Naive thymus-derived CD4-positive, alpha-beta T cell (primary cell): ENCODE measurements at regions of chr3 and their contacts with region 1.

Region 1: DNA sequence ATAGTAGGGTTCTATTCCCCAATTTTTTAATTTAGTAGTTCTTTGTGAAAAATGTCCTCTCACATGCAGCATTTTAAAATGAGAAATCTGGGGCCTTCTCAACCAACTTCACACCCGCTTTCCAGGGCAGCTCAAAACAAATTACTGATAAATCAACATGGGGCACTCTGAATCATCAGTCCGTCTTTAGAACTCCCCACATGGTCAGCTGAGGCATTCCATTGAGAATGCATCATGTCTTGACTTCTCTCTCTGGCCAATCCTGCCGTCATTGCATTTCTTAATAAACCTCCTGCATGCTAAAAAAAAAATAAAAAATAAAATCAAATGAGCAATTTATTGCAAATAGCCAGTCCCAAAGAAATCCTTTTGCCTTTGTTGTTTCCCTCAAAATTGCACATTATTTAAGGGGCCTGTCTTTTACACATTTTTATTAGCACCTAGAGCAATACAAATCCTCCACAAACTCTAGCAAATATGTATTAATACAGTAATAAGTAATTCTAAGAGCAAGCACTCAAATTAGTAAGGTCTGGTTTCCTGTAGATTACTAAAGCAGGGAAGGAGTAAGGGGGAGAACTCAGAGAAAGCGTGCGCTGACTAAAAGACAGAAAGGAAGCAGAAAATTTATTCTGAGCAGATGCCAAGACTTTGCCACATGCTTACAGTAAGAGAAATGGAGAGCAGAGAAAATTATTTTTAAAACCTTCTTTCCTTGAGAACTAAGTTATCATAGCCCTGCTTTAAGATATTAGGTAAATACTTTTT is 175.7 kb downstream of the TNIK start:
- DNase-seq: no peak
- ATAC-seq: no peak
- H3K4me3 ChIP-seq: no peak overlapping the region
- H3K4me3 Mint-ChIP-seq: peak overlapping the region in 7 of 10 donors; percentile 1 to 65 (median 5)
- H3K27ac ChIP-seq: no peak overlapping the region
- H3K27ac Mint-ChIP-seq: peak overlapping the region in 4 of 9 donors; percentile 28 to 69 (median 46)
- H3K4me1 ChIP-seq: peaks cover 13 to 32% of the 10 kb centered on the region in 2 donors
- H3K4me1 Mint-ChIP-seq: peaks cover 27 to 82% (median 71%) of the 10 kb centered on the region in 7 donors
- H3K27me3 ChIP-seq: no peaks in the 10 kb centered on the region
- H3K27me3 Mint-ChIP-seq: no peaks in the 10 kb centered on the region

Region 2: GRCh38 chr3:170350515-170351413 is 933.7 kb before region 1 on chr3:
- CTCF ChIA-PET with region 1: no interaction called
- POLR2A ChIA-PET with region 1: no interaction called
- intact Hi-C with region 1: no loop called
- DNase-seq: no peak
- ATAC-seq: no peak
- H3K4me3 ChIP-seq: no peak overlapping the region
- H3K4me3 Mint-ChIP-seq: no peak overlapping the region
- H3K27ac ChIP-seq: no peak overlapping the region
- H3K27ac Mint-ChIP-seq: peak overlapping the region in 6 of 9 donors; percentile 8 to 52 (median 30)
- H3K4me1 ChIP-seq: no peaks in the 10 kb centered on the region
- H3K4me1 Mint-ChIP-seq: peaks cover 7 to 33% (median 22%) of the 10 kb centered on the region in 7 donors
- H3K27me3 ChIP-seq: no peaks in the 10 kb centered on the region
- H3K27me3 Mint-ChIP-seq: peaks cover 0 to 20% (median 0%) of the 10 kb centered on the region in 5 donors

Region 3: DNA sequence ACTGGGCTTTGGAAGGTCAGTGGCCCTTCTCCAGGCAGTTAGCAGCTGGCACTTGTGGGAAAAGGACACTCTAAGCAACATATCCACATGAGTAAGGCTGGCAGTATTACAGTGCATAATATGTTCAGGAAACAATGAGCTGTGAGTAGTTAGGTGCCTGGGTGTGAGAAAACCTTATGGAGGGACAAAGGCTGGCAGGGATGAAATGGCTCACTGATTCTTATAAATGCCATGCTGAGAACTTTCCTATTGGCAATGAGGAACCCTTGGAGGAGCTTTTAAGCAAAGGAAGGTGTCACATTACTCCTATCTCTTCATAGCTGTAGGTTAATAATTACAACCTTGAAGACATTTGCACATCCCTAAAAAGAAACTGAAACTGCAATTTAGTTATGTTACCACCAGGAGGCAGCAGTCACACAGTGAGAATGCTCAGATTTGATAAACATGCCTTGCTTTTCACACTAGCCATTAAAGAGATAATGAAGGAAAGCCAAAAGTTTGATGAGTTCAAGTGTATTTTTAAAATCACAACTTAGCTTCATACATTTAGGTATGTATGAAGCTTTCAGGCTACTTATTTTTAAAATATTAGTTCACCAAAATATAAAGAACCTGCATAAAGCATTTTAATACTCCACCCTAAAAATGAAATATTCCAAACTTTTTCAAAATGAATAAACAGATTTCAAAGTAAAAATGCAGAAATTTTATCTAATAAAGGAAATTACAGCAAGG is 121.3 kb before region 1 on chr3:
- CTCF ChIA-PET with region 1: no interaction called
- POLR2A ChIA-PET with region 1: no interaction called
- intact Hi-C with region 1: no loop called
- DNase-seq: peak in 7 of 9 donors; percentile 19 to 51 (median 47)
- ATAC-seq: peak; percentile 55
- H3K4me3 ChIP-seq: no peak overlapping the region
- H3K4me3 Mint-ChIP-seq: no peak overlapping the region
- H3K27ac ChIP-seq: no peak overlapping the region
- H3K27ac Mint-ChIP-seq: peak overlapping the region in 1 of 9 donors; percentile 56
- H3K4me1 ChIP-seq: no peaks in the 10 kb centered on the region
- H3K4me1 Mint-ChIP-seq: peaks cover 9 to 25% (median 19%) of the 10 kb centered on the region in 7 donors
- H3K27me3 ChIP-seq: no peaks in the 10 kb centered on the region
- H3K27me3 Mint-ChIP-seq: no peaks in the 10 kb centered on the region

Region 4: GRCh38 chr3:171187706-171188290 is 96.7 kb before region 1 on chr3:
- CTCF ChIA-PET with region 1: no interaction called
- POLR2A ChIA-PET with region 1: no interaction called
- intact Hi-C with region 1: loop called in 1 of 2 experiments (anchors 5 kb)
- DNase-seq: peak in 5 of 9 donors; percentile 6 to 43 (median 31)
- ATAC-seq: peak; percentile 68
- H3K4me3 ChIP-seq: no peak overlapping the region
- H3K4me3 Mint-ChIP-seq: no peak overlapping the region
- H3K27ac ChIP-seq: no peak overlapping the region
- H3K27ac Mint-ChIP-seq: no peak overlapping the region
- H3K4me1 ChIP-seq: no peaks in the 10 kb centered on the region
- H3K4me1 Mint-ChIP-seq: peaks cover 9 to 50% (median 19%) of the 10 kb centered on the region in 7 donors
- H3K27me3 ChIP-seq: no peaks in the 10 kb centered on the region
- H3K27me3 Mint-ChIP-seq: no peaks in the 10 kb centered on the region

Region 5: GRCh38 chr3:171257251-171258203 is 27.0 kb before region 1 on chr3:
- CTCF ChIA-PET with region 1: interaction called, 3 read pairs
- POLR2A ChIA-PET with region 1: interaction called, 3 read pairs
- intact Hi-C with region 1: loop called in 1 of 2 experiments (anchors 1 kb)
- DNase-seq: peak in 3 of 9 donors; percentile 13 to 36 (median 33)
- ATAC-seq: peak; percentile 45
- H3K4me3 ChIP-seq: no peak overlapping the region
- H3K4me3 Mint-ChIP-seq: peak overlapping the region; percentile 16 to 70 (median 59)
- H3K27ac ChIP-seq: peak overlapping the region; percentile 70
- H3K27ac Mint-ChIP-seq: peak overlapping the region in 8 of 9 donors; percentile 91 to 99 (median 94)
- H3K4me1 ChIP-seq: peaks cover 53 to 70% of the 10 kb centered on the region in 2 donors
- H3K4me1 Mint-ChIP-seq: peaks cover 59 to 100% (median 93%) of the 10 kb centered on the region in 7 donors
- H3K27me3 ChIP-seq: no peaks in the 10 kb centered on the region
- H3K27me3 Mint-ChIP-seq: no peaks in the 10 kb centered on the region

Region 6: DNA sequence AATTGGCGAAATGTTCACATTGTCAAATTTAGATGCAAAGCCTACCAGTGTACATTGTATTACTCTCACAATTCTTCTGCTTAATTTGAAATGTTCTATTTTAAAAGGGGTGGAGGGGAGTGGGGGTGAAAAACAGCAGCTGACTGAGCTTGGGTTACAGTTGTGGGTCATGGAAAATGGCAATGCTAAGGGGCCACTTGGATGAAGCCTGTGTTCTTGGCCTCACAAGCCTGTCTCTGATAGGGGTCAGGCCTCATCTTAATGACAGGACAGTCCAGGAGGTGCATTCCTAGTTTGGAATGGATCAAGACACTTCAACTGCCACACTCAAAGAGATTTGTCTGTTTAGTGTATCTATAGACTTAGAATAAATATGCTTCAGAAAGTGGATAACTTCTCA is 17.5 kb after region 1 on chr3:
- CTCF ChIA-PET with region 1: interaction called, 7 read pairs
- POLR2A ChIA-PET with region 1: no interaction called
- intact Hi-C with region 1: loop called in 1 of 2 experiments (anchors 2 kb)
- DNase-seq: no peak
- ATAC-seq: no peak
- H3K4me3 ChIP-seq: no peak overlapping the region
- H3K4me3 Mint-ChIP-seq: no peak overlapping the region
- H3K27ac ChIP-seq: no peak overlapping the region
- H3K27ac Mint-ChIP-seq: no peak overlapping the region
- H3K4me1 ChIP-seq: peaks cover 0 to 16% of the 10 kb centered on the region in 2 donors
- H3K4me1 Mint-ChIP-seq: peaks cover 34 to 88% (median 82%) of the 10 kb centered on the region in 7 donors
- H3K27me3 ChIP-seq: no peaks in the 10 kb centered on the region
- H3K27me3 Mint-ChIP-seq: no peaks in the 10 kb centered on the region

Region 7: DNA sequence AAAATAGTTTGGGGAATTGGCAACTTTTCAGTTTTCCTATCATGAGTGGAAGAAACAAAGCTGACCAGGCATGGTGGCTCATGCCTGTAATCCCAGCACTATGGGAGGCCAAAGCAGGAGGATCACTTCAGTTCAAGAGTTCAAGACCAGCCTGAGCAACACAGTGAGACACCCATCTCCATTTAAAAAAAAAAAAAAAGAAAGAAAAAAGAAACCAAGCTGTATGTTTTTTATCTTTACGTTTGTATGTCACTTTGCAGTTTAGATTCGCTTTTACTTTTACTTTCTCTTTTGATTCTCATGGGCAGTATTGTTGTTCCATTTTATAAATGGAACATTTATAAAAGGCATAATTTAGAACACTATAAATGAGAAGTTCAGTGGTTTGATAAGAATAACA is 206.9 kb after region 1 on chr3:
- CTCF ChIA-PET with region 1: no interaction called
- POLR2A ChIA-PET with region 1: no interaction called
- intact Hi-C with region 1: loop called in 1 of 2 experiments (anchors 1 kb)
- DNase-seq: peak in 6 of 9 donors; percentile 14 to 57 (median 36)
- ATAC-seq: peak; percentile 26
- H3K4me3 ChIP-seq: peak overlapping the region; percentile 10
- H3K4me3 Mint-ChIP-seq: peak overlapping the region; percentile 36 to 82 (median 74)
- H3K27ac ChIP-seq: no peak overlapping the region
- H3K27ac Mint-ChIP-seq: peak overlapping the region; percentile 79 to 90 (median 85)
- H3K4me1 ChIP-seq: peaks cover 32 to 38% of the 10 kb centered on the region in 2 donors
- H3K4me1 Mint-ChIP-seq: peaks cover 15 to 55% (median 48%) of the 10 kb centered on the region in 7 donors
- H3K27me3 ChIP-seq: no peaks in the 10 kb centered on the region
- H3K27me3 Mint-ChIP-seq: no peaks in the 10 kb centered on the region